Endothelial cell of umbilical vein (primary cell): ENCODE measurements at regions of chr3 and their contacts with region 1.

Region 1: DNA sequence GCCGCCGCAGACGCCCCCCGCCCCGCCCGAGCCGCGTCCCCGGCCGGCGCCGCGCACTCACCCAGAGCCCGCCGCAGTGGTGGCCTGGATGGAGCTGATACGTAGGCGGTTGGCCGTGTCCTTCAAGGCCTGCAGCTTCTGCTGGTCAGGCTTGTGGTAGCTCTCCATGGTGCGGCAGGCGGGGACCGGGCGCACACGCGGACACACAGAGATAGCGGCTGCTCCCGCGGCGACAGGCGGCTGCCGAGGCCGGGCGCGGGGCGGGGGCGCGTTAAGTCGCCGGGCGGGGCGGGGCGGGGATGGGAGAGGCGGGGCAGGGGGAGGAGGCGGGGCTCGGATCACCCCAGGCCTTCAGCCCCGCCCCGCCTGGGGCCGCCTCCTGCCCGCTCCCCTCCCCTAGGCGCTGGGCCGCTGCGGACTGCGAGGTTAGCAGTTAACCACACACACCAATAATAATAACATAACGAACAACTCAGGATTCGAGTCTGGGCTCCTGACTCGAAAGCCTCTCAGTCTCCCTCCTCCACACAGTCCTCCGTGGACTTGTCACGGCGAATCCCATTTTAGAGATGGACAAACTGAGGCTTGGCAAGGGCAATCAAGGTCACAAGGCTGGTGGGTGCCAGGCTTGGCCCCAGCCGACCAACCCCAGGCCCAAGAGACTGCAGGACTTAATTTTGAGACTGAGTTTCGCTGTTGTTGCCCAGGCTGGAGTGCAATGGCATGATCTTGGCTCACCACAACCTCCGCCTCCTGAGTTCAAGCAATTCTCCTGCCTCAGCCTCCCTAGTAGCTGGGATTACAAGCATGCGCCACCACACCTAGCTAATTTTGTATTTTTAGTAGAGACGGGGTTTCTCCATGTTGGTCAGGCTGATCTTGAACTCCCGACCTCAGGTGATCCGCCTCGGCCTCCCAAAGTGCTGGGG is at the start of gene TKT:
- DNase-seq: peak; percentile 84
- H3K4me3 ChIP-seq: peak within 1 kb of the TSS; percentile 70 to 98 (median 88)
- H3K27ac ChIP-seq: peak within 1 kb of the TSS; percentile 44
- H3K4me1 ChIP-seq: peaks cover 20% of the 10 kb centered on the region
- H3K27me3 ChIP-seq: no peaks in the 10 kb centered on the region
- CTCF ChIP-seq: no peak
- POLR2A ChIP-seq: peak; percentile 91
- total RNA-seq, gene TKT: 510 and 586 TPM in 2 replicates

Region 2: DNA sequence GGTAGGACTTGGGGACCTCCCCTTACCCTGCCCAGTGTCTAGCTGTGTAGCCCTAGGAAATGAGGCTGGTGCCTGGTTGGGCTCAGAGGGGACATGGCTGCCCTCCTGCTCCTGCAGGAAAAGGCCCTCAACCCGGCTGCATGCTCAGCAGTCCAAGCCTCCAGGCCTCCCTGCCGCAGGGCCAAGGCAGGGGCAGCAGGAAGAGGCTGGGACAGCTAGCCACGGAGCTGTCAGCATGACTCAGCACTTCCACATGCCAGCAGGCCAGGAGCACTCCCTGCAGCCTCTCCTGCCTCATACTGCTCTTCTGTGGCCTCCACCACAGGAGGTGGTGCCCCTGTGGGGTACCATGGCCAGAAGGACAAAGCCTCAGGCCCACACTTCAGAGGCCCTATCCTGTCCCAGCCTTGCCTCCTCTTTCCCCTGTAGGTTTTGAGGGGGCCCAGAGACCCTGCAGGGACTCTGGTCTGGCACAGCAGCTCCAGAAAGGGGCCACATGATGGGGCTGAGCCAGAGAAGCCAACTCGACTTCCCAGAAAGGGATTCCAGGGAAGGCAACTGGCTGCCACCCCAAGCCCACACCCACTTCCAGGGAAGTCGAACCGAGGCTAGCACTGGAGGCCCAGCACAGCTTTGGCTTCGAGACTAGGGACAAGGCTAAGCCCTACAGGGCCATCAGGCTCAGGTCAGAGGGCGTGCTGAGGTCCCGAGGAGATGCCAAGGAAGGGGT is 19.8 kb before region 1 on chr3:
- CTCF ChIA-PET with region 1: no interaction called
- POLR2A ChIA-PET with region 1: interaction called, 4 read pairs
- dilution Hi-C with region 1: no loop called
- intact Hi-C with region 1: loop called (anchors 1 kb)
- DNase-seq: peak; percentile 90
- H3K4me3 ChIP-seq: no peak overlapping the region
- H3K27ac ChIP-seq: peak overlapping the region; percentile 88
- H3K4me1 ChIP-seq: peaks cover 39% of the 10 kb centered on the region
- H3K27me3 ChIP-seq: no peaks in the 10 kb centered on the region
- CTCF ChIP-seq: no peak
- POLR2A ChIP-seq: peak; percentile 46